B cell (primary cell): ENCODE measurements at regions of chr4 and their contacts with region 1.

Region 1: GRCh38 chr4:113781439-113782040 is 20.0 kb upstream of the CAMK2D start:
- DNase-seq: peak; percentile 54
- ATAC-seq: no peak
- H3K4me3 ChIP-seq: no peak overlapping the region
- H3K4me3 Mint-ChIP-seq: no peak overlapping the region
- H3K27ac ChIP-seq: no peak overlapping the region
- H3K27ac Mint-ChIP-seq: no peak overlapping the region
- H3K4me1 ChIP-seq: no peaks in the 10 kb centered on the region
- H3K4me1 Mint-ChIP-seq: no peaks in the 10 kb centered on the region
- H3K27me3 ChIP-seq: peaks cover 0 to 4% (median 1%) of the 10 kb centered on the region in 4 experiments
- H3K27me3 Mint-ChIP-seq: peaks cover 12% of the 10 kb centered on the region
- CTCF ChIP-seq: peak; percentile 85

Region 2: GRCh38 chr4:113908829-113909228 is 127.3 kb after region 1 on chr4:
- CTCF ChIA-PET with region 1: no interaction called
- POLR2A ChIA-PET with region 1: no interaction called
- intact Hi-C with region 1: loop called (anchors 5 kb)
- DNase-seq: peak; percentile 9
- ATAC-seq: no peak
- H3K4me3 ChIP-seq: no peak overlapping the region
- H3K4me3 Mint-ChIP-seq: no peak overlapping the region
- H3K27ac ChIP-seq: no peak overlapping the region
- H3K27ac Mint-ChIP-seq: no peak overlapping the region
- H3K4me1 ChIP-seq: no peaks in the 10 kb centered on the region
- H3K4me1 Mint-ChIP-seq: no peaks in the 10 kb centered on the region
- H3K27me3 ChIP-seq: no peaks in the 10 kb centered on the region
- H3K27me3 Mint-ChIP-seq: peaks cover 3% of the 10 kb centered on the region
- CTCF ChIP-seq: peak; percentile 18